ENCODE measurements at regions of chr1 and their contacts with region 1.

Region 1: DNA sequence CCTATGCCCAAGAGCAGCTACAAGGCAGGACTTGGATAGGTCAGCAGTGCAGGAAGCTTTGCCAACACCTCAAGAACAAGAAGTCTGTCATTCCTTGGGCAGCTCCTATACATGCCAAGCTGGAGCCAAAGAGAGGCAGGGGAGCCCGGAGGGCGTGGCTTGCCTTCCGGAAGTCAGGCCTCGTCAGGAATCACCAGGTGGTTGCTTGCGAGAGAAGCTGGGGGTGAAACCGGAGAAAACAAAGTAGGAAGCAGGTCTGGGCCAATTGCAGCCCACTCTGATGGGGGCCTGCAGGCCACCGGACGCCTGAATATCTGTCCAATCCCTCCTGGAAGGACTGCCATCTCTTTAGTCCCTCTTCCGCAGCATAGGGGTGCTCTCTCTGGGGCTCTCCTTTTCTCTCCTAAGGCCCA is 794 bp upstream of the FAM76A start:
- DNase-seq: peak; percentile 34
- H3K4me3 ChIP-seq: peak overlapping the region; percentile 97
- H3K27ac ChIP-seq: no peak overlapping the region
- H3K4me1 ChIP-seq: peaks cover 6% of the 10 kb centered on the region
- H3K27me3 ChIP-seq: no peaks in the 10 kb centered on the region
- CTCF ChIP-seq: no peak

Region 2: DNA sequence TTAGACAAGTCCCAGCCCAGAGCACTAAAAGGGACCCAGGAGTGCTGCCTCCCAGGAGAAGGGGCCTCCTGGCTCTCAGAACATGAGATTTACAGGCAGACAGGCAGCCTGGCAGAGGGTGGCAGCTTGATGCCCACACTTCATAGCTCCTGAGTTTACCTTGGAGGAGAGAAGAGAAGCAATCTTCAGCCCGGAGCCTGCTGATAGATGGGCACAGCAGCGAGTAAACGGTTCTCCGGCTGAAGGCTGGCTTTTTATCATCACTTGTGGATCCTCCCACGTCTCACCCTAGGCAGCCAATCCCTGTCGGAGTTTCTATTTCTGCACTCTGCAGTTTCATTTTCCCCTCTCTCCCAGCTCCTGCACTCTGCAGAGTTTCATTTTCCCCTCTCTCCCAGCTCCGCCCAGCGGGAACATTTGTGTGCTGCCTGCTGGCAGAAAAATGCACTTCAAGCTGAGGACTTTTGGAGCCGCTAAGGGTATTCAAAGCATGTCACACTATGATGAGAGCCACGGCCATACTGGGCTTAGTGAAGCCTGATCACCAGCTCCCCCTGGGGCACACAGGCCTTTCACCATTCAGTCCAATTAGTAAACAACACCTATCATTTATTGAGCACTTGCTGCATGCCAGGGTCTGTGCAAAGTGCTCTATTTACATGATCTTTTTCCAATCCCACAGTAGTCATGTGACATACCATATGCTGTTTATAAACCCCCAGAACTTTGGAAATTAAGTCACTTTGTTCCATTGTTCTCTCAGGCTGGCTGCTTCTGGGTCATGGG is 52.8 kb before region 1 on chr1 and contains the start of gene IFI6:
- intact Hi-C with region 1: loop called (anchors 5 kb)
- DNase-seq: peak; percentile 91
- H3K4me3 ChIP-seq: peak within 1 kb of the TSS; percentile 42
- H3K27ac ChIP-seq: peak within 1 kb of the TSS; percentile 83
- H3K4me1 ChIP-seq: peaks cover 17% of the 10 kb centered on the region
- H3K27me3 ChIP-seq: no peaks in the 10 kb centered on the region
- CTCF ChIP-seq: peak; percentile 39
- total RNA-seq, gene IFI6: 18.0 to 25.1 TPM